ENCODE measurements at regions of chr3 and their contacts with region 1.

Region 1: GRCh38 chr3:141782454-141782853 is 19.2 kb downstream of the GRK7 start:
- DNase-seq: peak; percentile 12
- H3K4me3 ChIP-seq: no peak overlapping the region
- H3K27ac ChIP-seq: no peak overlapping the region
- H3K4me1 ChIP-seq: no peaks in the 10 kb centered on the region
- H3K27me3 ChIP-seq: no peaks in the 10 kb centered on the region
- CTCF ChIP-seq: peak in 1 of 2 donors; percentile 56

Region 2: GRCh38 chr3:141699897-141700296 is 82.6 kb before region 1 on chr3:
- CTCF ChIA-PET with region 1: no interaction called
- dilution Hi-C with region 1: loop called (anchors 5 kb)
- in situ Hi-C with region 1: no loop called
- intact Hi-C with region 1: no loop called
- DNase-seq: no peak
- H3K4me3 ChIP-seq: no peak overlapping the region
- H3K27ac ChIP-seq: no peak overlapping the region
- H3K4me1 ChIP-seq: no peaks in the 10 kb centered on the region
- H3K27me3 ChIP-seq: peaks cover 5% of the 10 kb centered on the region
- CTCF ChIP-seq: no peak

Region 3: DNA sequence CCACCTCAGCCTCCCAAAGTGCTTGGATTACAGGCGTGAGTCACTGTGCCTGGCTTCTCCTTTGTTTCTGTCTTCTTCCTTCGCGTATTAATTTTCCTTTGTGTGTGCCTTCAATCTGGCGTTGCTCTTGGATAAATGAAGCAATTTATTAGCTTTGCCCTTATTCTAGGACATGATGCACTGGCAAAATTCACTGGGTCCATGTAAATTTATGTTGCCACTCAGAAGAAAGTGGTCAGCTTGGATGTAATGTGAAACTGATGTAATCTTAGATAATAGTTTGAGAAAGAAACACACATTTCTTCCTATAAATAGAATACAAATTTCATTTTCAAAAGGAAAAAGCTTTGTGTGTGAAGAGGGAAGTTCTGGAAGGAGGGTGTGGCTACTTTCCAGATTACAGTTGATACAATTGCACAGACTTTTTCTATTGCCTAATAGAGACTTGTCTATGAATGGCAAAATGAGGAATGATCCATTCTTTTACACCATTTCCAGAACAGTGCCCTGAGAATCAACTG is 70.7 kb after region 1 on chr3:
- CTCF ChIA-PET with region 1: no interaction called
- dilution Hi-C with region 1: loop called (anchors 5 kb)
- in situ Hi-C with region 1: no loop called
- intact Hi-C with region 1: no loop called
- DNase-seq: no peak
- H3K4me3 ChIP-seq: no peak overlapping the region
- H3K27ac ChIP-seq: no peak overlapping the region
- H3K4me1 ChIP-seq: no peaks in the 10 kb centered on the region
- H3K27me3 ChIP-seq: no peaks in the 10 kb centered on the region
- CTCF ChIP-seq: no peak

Region 4: GRCh38 chr3:141913150-141913811 is 130.8 kb after region 1 on chr3:
- CTCF ChIA-PET with region 1: no interaction called
- dilution Hi-C with region 1: no loop called
- in situ Hi-C with region 1: no loop called
- intact Hi-C with region 1: loop called (anchors 1 kb)
- DNase-seq: peak; percentile 42
- H3K4me3 ChIP-seq: no peak overlapping the region
- H3K27ac ChIP-seq: no peak overlapping the region
- H3K4me1 ChIP-seq: no peaks in the 10 kb centered on the region
- H3K27me3 ChIP-seq: no peaks in the 10 kb centered on the region
- CTCF ChIP-seq: peak; percentile 68 to 69